Ascending aorta (tissue), 2 donors: ENCODE measurements at regions of chr11 and their contacts with region 1.

Region 1: GRCh38 chr11:79440441-79441194 is at the start of gene TENM4:
- DNase-seq: peak; percentile 36 to 89
- H3K4me3 ChIP-seq: peak within 1 kb of the TSS; percentile 71 to 73
- H3K27ac ChIP-seq: peak within 1 kb of the TSS; percentile 87 to 89
- H3K4me1 ChIP-seq: peaks cover 0 to 8% of the 10 kb centered on the region in 2 donors
- H3K27me3 ChIP-seq: no peaks in the 10 kb centered on the region
- CTCF ChIP-seq: peak in 2 of 3 experiments; percentile 17 to 32
- total RNA-seq, gene TENM4: 11.9 TPM

Region 2: GRCh38 chr11:78801161-78801884 is 639.3 kb before region 1 on chr11:
- intact Hi-C with region 1: loop called (anchors 5 kb)
- DNase-seq: peak in 1 of 2 donors; percentile 83
- H3K4me3 ChIP-seq: no peak overlapping the region
- H3K27ac ChIP-seq: peak overlapping the region; percentile 69 to 75
- H3K4me1 ChIP-seq: peaks cover 19 to 30% of the 10 kb centered on the region in 2 donors
- H3K27me3 ChIP-seq: no peaks in the 10 kb centered on the region
- CTCF ChIP-seq: no peak

Region 3: DNA sequence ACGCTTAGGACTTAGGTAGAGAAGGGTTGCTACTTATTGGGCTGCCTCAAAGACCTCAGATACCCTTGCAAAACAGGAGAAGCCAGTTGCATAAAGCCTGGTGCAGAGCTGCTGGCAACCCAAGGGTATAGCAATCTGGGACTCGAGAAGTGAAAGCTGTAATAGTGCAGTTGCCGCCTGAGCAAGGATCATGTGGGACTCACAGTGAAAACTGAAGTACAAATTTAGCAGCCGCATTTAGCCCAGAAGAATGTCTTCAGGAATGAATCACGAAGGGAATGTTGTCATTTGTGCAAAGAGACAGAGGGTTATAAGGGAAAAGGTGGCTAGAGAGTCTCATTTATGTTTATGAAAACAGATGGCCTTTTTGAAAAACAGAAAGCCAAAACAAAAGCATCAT is 267.0 kb before region 1 on chr11:
- intact Hi-C with region 1: loop called (anchors 10 kb)
- DNase-seq: peak in 1 of 2 donors; percentile 80
- H3K4me3 ChIP-seq: peak overlapping the region; percentile 12 to 14
- H3K27ac ChIP-seq: peak overlapping the region; percentile 59 to 61
- H3K4me1 ChIP-seq: peaks cover 0 to 11% of the 10 kb centered on the region in 2 donors
- H3K27me3 ChIP-seq: no peaks in the 10 kb centered on the region
- CTCF ChIP-seq: peak in 1 of 3 experiments; percentile 6

Region 4: DNA sequence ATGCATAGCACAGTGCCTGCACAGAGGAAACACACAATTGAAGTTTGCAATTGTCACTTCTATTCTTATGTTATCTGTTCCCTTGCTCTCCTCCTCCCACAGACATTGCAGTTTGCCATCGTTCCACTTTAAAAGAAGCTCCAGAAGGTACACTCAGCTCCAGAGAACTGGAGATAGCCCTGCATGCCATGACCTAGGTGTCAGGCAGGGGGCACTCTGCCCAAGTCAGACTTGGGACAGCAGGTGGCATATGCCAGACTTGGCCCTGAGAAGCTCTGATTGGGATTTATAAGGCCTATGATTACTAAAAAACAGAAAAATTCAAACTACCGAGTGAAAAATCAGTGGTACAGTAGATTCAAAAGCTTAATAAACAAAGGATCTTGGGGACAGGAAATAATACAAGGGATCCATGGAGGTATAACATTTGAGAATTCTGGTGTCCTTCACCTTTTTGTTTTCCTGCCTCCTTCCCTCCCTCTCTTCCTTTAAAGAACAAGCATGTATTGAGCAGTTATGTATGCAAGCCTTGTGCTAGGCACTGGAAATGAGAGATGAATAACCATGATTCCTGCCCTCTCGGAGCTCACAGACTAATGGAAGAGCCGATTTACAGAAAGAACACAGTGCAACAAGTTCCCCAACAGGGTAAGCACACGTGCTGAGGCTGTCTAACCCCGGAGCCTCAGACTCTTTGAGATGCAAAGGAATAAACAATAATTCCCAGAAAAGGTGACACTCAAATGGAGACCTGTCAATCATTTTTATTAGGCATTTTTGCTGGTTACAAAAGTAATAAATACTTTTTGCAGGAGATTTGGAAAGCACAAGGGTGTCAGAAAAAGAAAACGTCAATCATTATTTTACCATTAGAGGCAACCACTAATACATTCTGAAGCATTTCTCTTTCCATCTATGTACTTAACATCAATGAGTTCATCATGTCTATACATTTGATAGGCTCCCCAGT is 39.6 kb before region 1 on chr11:
- intact Hi-C with region 1: loop called (anchors 2 kb)
- DNase-seq: peak in 1 of 2 donors; percentile 70
- H3K4me3 ChIP-seq: no peak overlapping the region
- H3K27ac ChIP-seq: no peak overlapping the region
- H3K4me1 ChIP-seq: no peaks in the 10 kb centered on the region
- H3K27me3 ChIP-seq: no peaks in the 10 kb centered on the region
- CTCF ChIP-seq: peak; percentile 48 to 75 (median 74)